ENCODE measurements at regions of chr1 and their contacts with region 1.

Region 1: DNA sequence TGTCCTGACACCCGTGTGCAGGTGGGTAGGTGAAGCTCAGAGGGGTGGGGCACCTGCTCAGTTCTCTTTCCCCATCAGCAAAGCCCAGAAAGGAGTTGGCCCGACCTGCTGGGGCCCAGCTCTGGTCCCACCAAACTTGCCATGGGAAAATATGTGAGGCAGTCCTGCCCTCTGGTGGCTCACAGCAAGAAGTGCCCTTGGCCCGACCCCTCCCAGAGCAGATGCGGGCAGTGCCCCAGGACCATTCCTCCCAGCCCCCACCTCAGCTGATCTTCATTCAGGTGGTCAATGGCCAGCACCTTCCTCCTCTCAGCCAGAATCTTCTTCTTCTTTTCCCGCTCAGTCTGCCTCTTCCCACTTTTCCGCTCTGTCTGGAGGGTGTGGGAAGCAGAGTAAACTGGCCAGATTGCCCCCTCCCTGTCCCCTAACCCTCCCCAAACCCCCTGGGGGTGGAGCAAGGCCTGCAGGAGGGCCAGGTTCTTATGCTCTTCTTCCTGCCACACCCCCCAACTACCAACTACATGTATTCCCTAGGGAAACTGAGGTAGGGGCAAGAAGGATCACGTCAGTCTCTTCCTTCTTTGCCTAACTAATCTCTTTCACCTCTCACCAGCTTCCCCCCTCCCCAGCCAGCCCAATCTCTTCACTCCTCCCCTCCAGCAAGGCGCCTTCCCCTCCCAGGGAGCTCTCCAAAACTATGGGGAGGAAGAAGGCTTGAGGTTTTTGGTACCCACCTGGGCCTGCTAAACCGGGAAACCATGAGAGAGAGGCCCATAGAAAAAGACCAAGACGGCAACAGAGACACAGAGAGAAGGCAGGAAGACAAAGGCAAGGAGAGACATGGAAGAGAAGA is 15.6 kb downstream of the TNNT2 start:
- DNase-seq: peak; percentile 93
- H3K4me3 ChIP-seq: no peak overlapping the region; a peak in 1 of 4 replicates
- H3K27ac ChIP-seq: no peak overlapping the region
- H3K4me1 ChIP-seq: peaks cover 0 to 5% of the 10 kb centered on the region in 2 experiments; a peak in 1 of 4 replicates
- H3K27me3 ChIP-seq: no peaks in the 10 kb centered on the region; the same call in 1 of the 2 replicates
- CTCF ChIP-seq: peak; percentile 90
- EP300 ChIP-seq: no peak
- RAD21 ChIP-seq: peak; percentile 91

Region 2: GRCh38 chr1:201042779-201043461 is 319.0 kb before region 1 on chr1:
- CTCF ChIA-PET with region 1: no interaction called
- POLR2A ChIA-PET with region 1: no interaction called
- DNase-seq: peak; percentile 76
- H3K4me3 ChIP-seq: peak overlapping the region in 1 of 2 experiments; percentile 7; a peak in 1 of 4 replicates
- H3K27ac ChIP-seq: no peak overlapping the region
- H3K4me1 ChIP-seq: peaks cover 0 to 7% of the 10 kb centered on the region in 2 experiments; a peak in 1 of 4 replicates
- H3K27me3 ChIP-seq: peaks cover 19% of the 10 kb centered on the region; the same call in 1 of the 2 replicates
- CTCF ChIP-seq: peak; percentile 87
- EP300 ChIP-seq: no peak
- RAD21 ChIP-seq: peak; percentile 92

Region 3: GRCh38 chr1:201149400-201149799 is 212.5 kb before region 1 on chr1:
- CTCF ChIA-PET with region 1: interaction called, 10 read pairs
- POLR2A ChIA-PET with region 1: no interaction called
- DNase-seq: peak; percentile 69
- H3K4me3 ChIP-seq: no peak overlapping the region
- H3K27ac ChIP-seq: no peak overlapping the region
- H3K4me1 ChIP-seq: peaks cover 10 to 11% of the 10 kb centered on the region in 2 experiments; a peak in 3 of 4 replicates
- H3K27me3 ChIP-seq: no peaks in the 10 kb centered on the region
- CTCF ChIP-seq: peak; percentile 60
- EP300 ChIP-seq: no peak
- RAD21 ChIP-seq: peak; percentile 56

Region 4: GRCh38 chr1:201282931-201283829 is 78.7 kb before region 1 on chr1 and contains the start of gene PKP1:
- CTCF ChIA-PET with region 1: interaction called, 11 read pairs
- POLR2A ChIA-PET with region 1: no interaction called
- DNase-seq: no peak
- H3K4me3 ChIP-seq: no peak within 1 kb of the TSS
- H3K27ac ChIP-seq: no peak within 1 kb of the TSS
- H3K4me1 ChIP-seq: peaks cover 0 to 17% of the 10 kb centered on the region in 2 experiments; a peak in 2 of 4 replicates
- H3K27me3 ChIP-seq: peaks cover 5% of the 10 kb centered on the region; the same call in 1 of the 2 replicates
- CTCF ChIP-seq: no peak
- EP300 ChIP-seq: no peak
- RAD21 ChIP-seq: no peak
- polyA plus RNA-seq, gene PKP1: not detected in 2 replicates

Region 5: DNA sequence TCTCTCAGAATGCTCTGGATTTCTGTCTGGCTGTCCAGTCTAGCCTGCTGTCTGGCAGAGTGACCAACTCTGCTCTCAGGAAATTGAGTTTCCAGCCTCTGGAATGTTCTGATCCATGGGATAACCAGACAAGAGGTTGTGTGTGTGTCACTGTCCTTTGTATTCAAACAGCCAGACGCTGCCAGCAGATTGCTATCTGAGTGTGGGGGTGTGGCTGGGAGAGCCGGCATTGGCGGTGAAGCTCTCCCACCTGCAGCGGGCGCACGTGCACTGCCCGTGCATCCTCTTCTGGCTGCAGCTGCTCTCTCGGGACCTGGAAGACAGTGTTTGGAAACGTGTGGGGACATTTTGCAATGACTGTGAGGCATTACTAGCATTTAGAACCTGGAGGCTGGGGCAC is 52.5 kb before region 1 on chr1:
- CTCF ChIA-PET with region 1: interaction called, 125 read pairs
- POLR2A ChIA-PET with region 1: no interaction called
- DNase-seq: peak; percentile 90
- H3K4me3 ChIP-seq: no peak overlapping the region
- H3K27ac ChIP-seq: peak overlapping the region; percentile 70 to 89
- H3K4me1 ChIP-seq: peaks cover 41 to 46% of the 10 kb centered on the region in 2 experiments; a peak in 3 of 4 replicates
- H3K27me3 ChIP-seq: no peaks in the 10 kb centered on the region
- CTCF ChIP-seq: peak; percentile 52
- EP300 ChIP-seq: peak in 1 of 2 experiments; percentile 93; a peak in 2 of 4 replicates
- RAD21 ChIP-seq: peak; percentile 85

Region 6: DNA sequence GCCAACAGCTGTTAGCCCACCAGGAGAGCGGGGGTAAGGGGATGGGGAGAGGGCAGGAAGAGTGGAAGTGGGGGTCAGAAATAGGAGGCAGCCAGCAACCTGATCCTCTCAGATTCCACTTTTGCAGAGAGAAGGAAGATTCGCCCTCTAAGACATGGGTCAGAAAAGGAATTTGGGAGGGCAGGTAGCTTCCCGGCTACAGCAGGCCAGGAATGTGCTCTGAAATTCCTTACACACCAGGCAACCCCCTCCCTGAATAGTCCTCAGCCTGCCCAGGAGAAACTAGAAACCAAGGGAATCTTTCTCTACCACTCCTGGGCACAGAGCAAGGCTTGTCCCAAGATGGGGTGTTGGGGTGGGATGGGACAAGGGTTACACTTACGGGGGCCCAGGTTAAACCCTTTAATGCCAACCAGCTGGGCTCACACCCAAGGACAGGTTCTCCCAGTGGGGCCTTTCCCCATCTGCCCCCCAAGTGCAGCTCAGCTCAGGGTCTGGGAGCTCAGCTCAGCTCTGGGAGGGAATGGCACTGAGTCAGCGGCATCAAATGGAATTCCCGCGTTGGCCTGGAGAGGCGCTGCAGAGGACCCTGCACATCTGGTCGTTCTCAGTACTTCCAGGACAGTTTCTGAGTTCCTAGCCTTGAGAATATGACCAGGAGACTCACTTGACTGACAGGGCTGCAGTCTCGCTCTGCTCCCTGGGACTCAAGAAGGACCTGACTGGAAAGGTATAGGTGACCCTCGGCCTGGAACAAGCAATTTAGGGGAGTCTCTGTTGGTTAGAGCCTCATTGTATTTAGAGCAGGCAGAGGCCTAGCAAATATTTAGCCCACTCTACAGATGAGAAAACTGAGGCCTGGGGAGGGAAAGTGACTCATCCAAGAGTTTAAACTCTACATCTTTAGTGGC is 14.8 kb after region 1 on chr1:
- CTCF ChIA-PET with region 1: interaction called, 37 read pairs
- POLR2A ChIA-PET with region 1: no interaction called
- DNase-seq: peak; percentile 58
- H3K4me3 ChIP-seq: no peak overlapping the region
- H3K27ac ChIP-seq: peak overlapping the region in 1 of 2 experiments; percentile 85; a peak in 2 of 4 replicates
- H3K4me1 ChIP-seq: peaks cover 0 to 32% of the 10 kb centered on the region in 2 experiments; a peak in 1 of 4 replicates
- H3K27me3 ChIP-seq: peaks cover 40% of the 10 kb centered on the region
- CTCF ChIP-seq: peak; percentile 33; the same call in 1 of the 2 replicates
- EP300 ChIP-seq: no peak
- RAD21 ChIP-seq: no peak

Region 7: DNA sequence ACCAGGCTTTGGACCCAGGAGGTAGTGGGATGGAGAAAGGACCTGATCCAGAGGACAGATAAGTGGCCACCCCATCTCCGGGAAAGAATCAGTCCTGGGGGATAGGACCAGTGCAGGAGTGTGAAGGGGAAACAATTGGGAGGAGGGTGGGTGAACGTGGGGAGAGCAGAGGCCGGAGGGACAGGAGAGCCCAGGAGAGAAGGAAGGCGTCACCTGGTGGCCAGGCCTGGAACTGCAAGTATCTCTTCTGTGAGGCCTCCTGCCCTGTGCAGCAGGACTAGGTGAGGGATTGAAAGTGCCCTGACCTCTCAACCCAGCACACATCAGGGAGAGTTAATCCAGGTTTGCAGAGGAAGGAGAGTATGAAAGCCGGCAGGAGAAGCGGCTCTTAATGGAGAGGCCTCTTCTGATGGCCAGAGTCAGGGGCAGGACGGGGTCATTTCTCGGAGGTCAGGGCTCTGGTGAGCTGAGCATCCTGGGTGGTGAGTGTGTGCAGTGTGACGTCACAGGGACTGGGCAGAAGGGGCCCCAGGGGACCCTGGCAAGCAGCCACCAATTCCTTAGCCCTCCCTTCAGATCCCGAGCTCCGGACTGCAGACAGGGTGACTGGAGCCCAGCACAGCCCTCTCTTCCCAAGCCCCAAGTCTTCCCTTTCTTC is 46.4 kb after region 1 on chr1:
- CTCF ChIA-PET with region 1: interaction called, 40 read pairs
- POLR2A ChIA-PET with region 1: no interaction called
- DNase-seq: peak; percentile 91
- H3K4me3 ChIP-seq: no peak overlapping the region; a peak in 1 of 4 replicates
- H3K27ac ChIP-seq: no peak overlapping the region
- H3K4me1 ChIP-seq: peaks cover 0 to 8% of the 10 kb centered on the region in 2 experiments; a peak in 1 of 4 replicates
- H3K27me3 ChIP-seq: peaks cover 31% of the 10 kb centered on the region; the same call in 1 of the 2 replicates
- CTCF ChIP-seq: peak; percentile 95
- EP300 ChIP-seq: no peak
- RAD21 ChIP-seq: peak; percentile 78

Region 8: GRCh38 chr1:201602413-201603265 is 240.8 kb after region 1 on chr1:
- CTCF ChIA-PET with region 1: no interaction called
- POLR2A ChIA-PET with region 1: no interaction called
- DNase-seq: no peak
- H3K4me3 ChIP-seq: no peak overlapping the region
- H3K27ac ChIP-seq: peak overlapping the region; percentile 82 to 95
- H3K4me1 ChIP-seq: peaks cover 41 to 64% of the 10 kb centered on the region in 2 experiments
- H3K27me3 ChIP-seq: no peaks in the 10 kb centered on the region
- CTCF ChIP-seq: no peak
- EP300 ChIP-seq: peak in 1 of 2 experiments; percentile 91; a peak in 2 of 4 replicates
- RAD21 ChIP-seq: no peak

Measured in SK-N-SH (cell line).